ENCODE measurements at regions of chr9 and their contacts with region 1.

Region 1: DNA sequence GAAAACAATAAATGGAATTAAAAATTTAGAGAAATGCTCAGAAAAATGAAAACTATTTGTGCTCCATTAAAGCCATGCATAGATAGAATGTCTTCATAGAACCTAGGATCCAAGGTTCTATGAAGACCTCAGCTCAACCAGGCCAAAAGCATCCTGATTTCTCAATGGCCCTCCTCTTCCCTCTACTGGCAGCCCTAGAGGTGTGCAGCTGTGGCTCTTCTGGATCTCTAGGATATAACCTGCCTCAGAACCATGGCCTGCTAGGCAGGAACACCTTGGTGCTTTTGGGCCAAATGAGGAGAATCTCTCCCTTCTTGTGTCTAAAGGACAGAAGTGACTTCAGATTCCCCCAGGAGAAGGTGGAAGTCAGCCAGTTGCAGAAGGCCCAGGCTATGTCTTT is 15.1 kb downstream of the IFNA1 start:
- DNase-seq: peak; percentile 63
- ATAC-seq: peak; percentile 67
- H3K4me3 ChIP-seq: no peak overlapping the region
- H3K4me3 Mint-ChIP-seq: no peak overlapping the region
- H3K27ac ChIP-seq: no peak overlapping the region
- H3K27ac Mint-ChIP-seq: no peak overlapping the region
- H3K4me1 ChIP-seq: no peaks in the 10 kb centered on the region
- H3K4me1 Mint-ChIP-seq: no peaks in the 10 kb centered on the region
- H3K27me3 ChIP-seq: peaks cover 0 to 9% (median 8%) of the 10 kb centered on the region in 4 experiments
- H3K27me3 Mint-ChIP-seq: peaks cover 30% of the 10 kb centered on the region
- CTCF ChIP-seq: peak; percentile 79

Region 2: GRCh38 chr9:21317956-21318923 is 137.1 kb before region 1 on chr9:
- CTCF ChIA-PET with region 1: interaction called, 92 read pairs
- POLR2A ChIA-PET with region 1: no interaction called
- intact Hi-C with region 1: loop called (anchors 2 kb)
- DNase-seq: peak; percentile 48
- ATAC-seq: peak; percentile 64
- H3K4me3 ChIP-seq: no peak overlapping the region
- H3K4me3 Mint-ChIP-seq: no peak overlapping the region
- H3K27ac ChIP-seq: no peak overlapping the region
- H3K27ac Mint-ChIP-seq: no peak overlapping the region
- H3K4me1 ChIP-seq: no peaks in the 10 kb centered on the region
- H3K4me1 Mint-ChIP-seq: peaks cover 4% of the 10 kb centered on the region
- H3K27me3 ChIP-seq: no peaks in the 10 kb centered on the region
- H3K27me3 Mint-ChIP-seq: peaks cover 9% of the 10 kb centered on the region
- CTCF ChIP-seq: peak; percentile 83

Region 3: DNA sequence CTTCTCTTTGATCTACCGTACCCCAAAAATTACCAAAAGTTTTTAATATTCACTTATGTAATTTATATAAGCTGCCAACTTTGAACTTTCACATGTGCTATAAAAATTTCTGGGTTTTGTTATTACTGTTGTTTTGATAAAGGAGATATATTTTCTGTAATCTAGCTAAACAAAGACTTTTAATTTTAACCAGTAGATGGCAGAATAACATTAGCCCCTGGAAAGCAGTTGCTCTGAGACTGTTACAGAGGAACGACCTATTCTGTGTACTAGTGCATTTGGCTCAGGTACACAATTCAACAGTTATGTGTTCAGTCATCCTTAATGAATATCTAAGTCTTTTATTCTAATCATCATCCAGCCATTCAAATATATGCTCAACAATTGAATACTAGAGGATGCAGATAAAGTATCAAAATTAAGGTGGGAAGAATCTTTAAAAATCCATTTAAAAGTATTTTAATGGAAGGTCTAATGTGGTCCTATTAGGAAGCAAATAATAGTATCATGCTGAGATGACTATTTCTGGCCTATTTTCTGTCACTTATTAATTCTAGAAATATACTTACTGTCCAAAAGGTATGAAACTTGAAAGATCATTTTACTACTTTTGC is 128.7 kb before region 1 on chr9:
- CTCF ChIA-PET with region 1: interaction called, 92 read pairs
- POLR2A ChIA-PET with region 1: no interaction called
- intact Hi-C with region 1: loop called (anchors 1 kb)
- DNase-seq: peak; percentile 70
- ATAC-seq: peak; percentile 80
- H3K4me3 ChIP-seq: no peak overlapping the region
- H3K4me3 Mint-ChIP-seq: no peak overlapping the region
- H3K27ac ChIP-seq: no peak overlapping the region
- H3K27ac Mint-ChIP-seq: no peak overlapping the region
- H3K4me1 ChIP-seq: peaks cover 2 to 3% of the 10 kb centered on the region in 2 donors
- H3K4me1 Mint-ChIP-seq: peaks cover 26% of the 10 kb centered on the region
- H3K27me3 ChIP-seq: no peaks in the 10 kb centered on the region
- H3K27me3 Mint-ChIP-seq: no peaks in the 10 kb centered on the region
- CTCF ChIP-seq: peak; percentile 90

Region 4: DNA sequence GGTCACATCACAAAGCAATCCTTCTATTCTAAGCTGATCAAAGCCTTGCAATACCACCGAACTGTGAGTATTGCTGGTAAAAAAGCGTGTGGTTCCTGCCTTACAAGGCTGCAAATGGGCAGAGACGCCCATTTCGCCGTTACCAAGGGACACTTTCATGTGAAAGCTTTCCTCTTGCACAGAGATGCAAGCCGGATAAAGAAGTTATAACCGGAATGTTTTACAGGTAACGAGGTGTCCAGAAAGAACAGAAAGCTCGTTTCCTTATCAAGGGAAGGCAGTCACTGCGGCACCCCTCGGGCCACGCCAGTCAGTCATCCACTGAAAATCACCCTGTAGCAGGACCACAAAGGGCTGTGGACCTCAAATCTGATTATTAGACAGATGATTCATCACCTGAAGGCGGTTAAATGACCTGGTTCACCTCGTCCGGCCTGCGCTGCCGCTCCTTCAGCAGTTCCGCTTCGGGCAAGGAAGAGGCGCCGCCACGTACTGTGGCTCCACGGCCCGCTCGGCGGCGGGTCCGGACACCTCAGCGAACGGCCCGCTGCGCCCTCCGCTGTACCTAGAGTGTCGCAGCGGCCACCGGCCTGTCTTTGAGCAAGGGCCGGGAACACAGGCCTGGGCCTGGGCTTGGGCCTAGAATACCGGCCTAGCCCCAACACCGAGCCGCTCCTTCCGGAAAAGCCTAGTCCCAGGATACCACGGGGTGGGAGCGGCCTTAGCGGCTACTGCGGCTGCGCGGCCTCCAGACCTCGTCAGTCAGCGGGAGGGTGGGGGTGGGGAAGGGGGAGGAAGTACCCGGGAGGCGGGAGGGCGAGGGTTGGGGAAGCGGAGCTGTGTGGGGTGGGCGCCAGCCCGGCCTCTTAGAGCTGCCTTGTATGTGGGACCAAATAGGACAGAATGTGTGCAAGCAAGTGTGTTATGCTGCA is 120.4 kb before region 1 on chr9 and contains the start of gene KLHL9:
- CTCF ChIA-PET with region 1: interaction called, 39 read pairs
- POLR2A ChIA-PET with region 1: no interaction called
- intact Hi-C with region 1: no loop called
- DNase-seq: peak; percentile 93
- ATAC-seq: peak; percentile 89
- H3K4me3 ChIP-seq: peak within 1 kb of the TSS; percentile 83 to 97 (median 89)
- H3K4me3 Mint-ChIP-seq: peak within 1 kb of the TSS; percentile 95
- H3K27ac ChIP-seq: peak within 1 kb of the TSS; percentile 90
- H3K27ac Mint-ChIP-seq: peak within 1 kb of the TSS; percentile 92
- H3K4me1 ChIP-seq: peaks cover 18 to 27% of the 10 kb centered on the region in 2 donors
- H3K4me1 Mint-ChIP-seq: peaks cover 49% of the 10 kb centered on the region
- H3K27me3 ChIP-seq: peaks cover 0 to 6% (median under 1%) of the 10 kb centered on the region in 4 experiments
- H3K27me3 Mint-ChIP-seq: peaks cover 12% of the 10 kb centered on the region
- CTCF ChIP-seq: no peak
- total RNA-seq, gene KLHL9: 17.5 and 17.6 TPM in 2 replicates

Region 5: DNA sequence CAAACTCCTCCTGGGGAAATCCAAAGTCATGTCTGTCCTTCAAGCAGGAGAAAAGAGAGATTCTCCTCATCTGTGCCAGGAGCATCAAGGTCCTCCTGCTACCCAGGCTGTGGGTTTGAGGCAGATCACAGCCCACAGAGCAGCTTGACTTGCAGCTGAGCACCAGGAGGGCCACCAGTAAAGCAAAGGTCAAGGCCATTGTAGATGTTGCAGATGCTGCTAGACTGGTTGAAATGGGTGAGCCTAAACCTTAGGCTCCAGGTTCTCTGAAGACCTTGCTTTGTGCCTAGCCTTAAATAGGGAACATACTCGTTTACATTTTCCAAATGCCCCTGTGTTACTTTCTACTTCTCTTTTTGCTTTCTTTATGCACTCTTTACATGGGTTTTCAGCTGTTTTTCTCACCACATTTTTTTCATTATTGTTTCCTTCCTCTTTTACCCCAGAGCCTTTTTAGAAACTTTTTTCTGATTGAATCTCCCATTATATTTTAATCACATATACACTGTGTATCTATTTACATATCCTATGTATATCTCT is 70.1 kb before region 1 on chr9 and contains the start of gene IFNA2:
- CTCF ChIA-PET with region 1: no interaction called
- POLR2A ChIA-PET with region 1: no interaction called
- intact Hi-C with region 1: no loop called
- DNase-seq: peak; percentile 69
- ATAC-seq: no peak
- H3K4me3 ChIP-seq: no peak within 1 kb of the TSS
- H3K4me3 Mint-ChIP-seq: peak within 1 kb of the TSS; percentile 40
- H3K27ac ChIP-seq: no peak within 1 kb of the TSS
- H3K27ac Mint-ChIP-seq: peak within 1 kb of the TSS; percentile 70
- H3K4me1 ChIP-seq: peaks cover 20 to 25% of the 10 kb centered on the region in 2 donors
- H3K4me1 Mint-ChIP-seq: peaks cover 33% of the 10 kb centered on the region
- H3K27me3 ChIP-seq: peaks cover 0 to 35% (median 14%) of the 10 kb centered on the region in 4 experiments
- H3K27me3 Mint-ChIP-seq: peaks cover 30% of the 10 kb centered on the region
- CTCF ChIP-seq: no peak
- total RNA-seq, gene IFNA2: not detected in 2 replicates

Region 6: GRCh38 chr9:21395778-21396717 is 59.3 kb before region 1 on chr9:
- CTCF ChIA-PET with region 1: interaction called, 16 read pairs
- POLR2A ChIA-PET with region 1: no interaction called
- intact Hi-C with region 1: no loop called
- DNase-seq: peak; percentile 74
- ATAC-seq: peak; percentile 52
- H3K4me3 ChIP-seq: peak overlapping the region in 4 of 5 experiments; percentile 22 to 52 (median 32)
- H3K4me3 Mint-ChIP-seq: peak overlapping the region; percentile 68
- H3K27ac ChIP-seq: no peak overlapping the region
- H3K27ac Mint-ChIP-seq: no peak overlapping the region
- H3K4me1 ChIP-seq: peaks cover 8 to 11% of the 10 kb centered on the region in 2 donors
- H3K4me1 Mint-ChIP-seq: peaks cover 18% of the 10 kb centered on the region
- H3K27me3 ChIP-seq: peaks cover 3 to 57% (median 37%) of the 10 kb centered on the region in 4 experiments
- H3K27me3 Mint-ChIP-seq: peaks cover 69% of the 10 kb centered on the region
- CTCF ChIP-seq: peak; percentile 87

Region 7: DNA sequence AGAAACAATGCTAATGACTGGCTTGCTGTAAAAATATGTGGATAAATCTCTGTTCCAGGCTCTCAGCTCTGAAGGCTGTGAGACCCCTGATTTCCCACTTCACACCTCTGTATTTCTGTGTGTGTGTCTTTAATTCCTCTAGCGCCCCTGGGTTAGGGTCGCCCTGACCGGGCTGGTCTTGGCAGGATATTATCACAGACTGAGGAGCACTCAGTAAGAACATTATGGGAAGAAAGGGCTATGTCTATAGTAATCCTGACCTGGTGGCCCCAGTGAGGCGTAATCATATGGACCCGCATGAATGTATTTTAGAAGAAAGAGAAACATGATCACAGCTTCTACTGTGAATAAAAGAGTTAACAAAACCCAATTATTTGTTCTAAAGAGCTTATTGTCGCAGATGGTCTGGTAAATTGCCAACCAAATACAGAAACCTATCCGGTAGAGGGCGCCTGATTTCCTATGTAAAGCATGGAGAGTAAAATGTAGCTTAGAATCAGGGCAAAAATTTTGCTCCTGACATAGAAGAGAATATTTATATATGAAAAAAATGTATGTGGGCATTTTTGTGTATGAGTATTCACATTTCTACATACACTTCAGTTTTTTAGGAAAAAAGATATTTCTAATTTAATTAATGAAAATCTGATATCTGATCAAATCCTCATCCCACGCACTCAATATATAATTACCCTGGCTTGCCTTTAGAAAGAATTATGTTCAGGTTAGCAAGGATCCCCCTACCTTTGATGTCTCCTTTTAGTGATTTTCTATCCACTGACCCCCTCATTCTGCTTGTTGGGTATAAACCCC is 20.9 kb before region 1 on chr9:
- CTCF ChIA-PET with region 1: interaction called, 50 read pairs
- POLR2A ChIA-PET with region 1: no interaction called
- intact Hi-C with region 1: no loop called
- DNase-seq: peak; percentile 65
- ATAC-seq: no peak
- H3K4me3 ChIP-seq: no peak overlapping the region
- H3K4me3 Mint-ChIP-seq: no peak overlapping the region
- H3K27ac ChIP-seq: no peak overlapping the region
- H3K27ac Mint-ChIP-seq: peak overlapping the region; percentile 57
- H3K4me1 ChIP-seq: peaks cover 5 to 7% of the 10 kb centered on the region in 2 donors
- H3K4me1 Mint-ChIP-seq: peaks cover 14% of the 10 kb centered on the region
- H3K27me3 ChIP-seq: peaks cover 0 to 43% (median 28%) of the 10 kb centered on the region in 4 experiments
- H3K27me3 Mint-ChIP-seq: peaks cover 64% of the 10 kb centered on the region
- CTCF ChIP-seq: peak; percentile 66

Region 8: GRCh38 chr9:21481470-21482056 is 26.2 kb after region 1 on chr9:
- CTCF ChIA-PET with region 1: no interaction called
- POLR2A ChIA-PET with region 1: no interaction called
- intact Hi-C with region 1: no loop called
- DNase-seq: no peak
- ATAC-seq: no peak
- H3K4me3 ChIP-seq: no peak overlapping the region
- H3K4me3 Mint-ChIP-seq: no peak overlapping the region
- H3K27ac ChIP-seq: no peak overlapping the region
- H3K27ac Mint-ChIP-seq: no peak overlapping the region
- H3K4me1 ChIP-seq: peaks cover 5 to 8% of the 10 kb centered on the region in 2 donors
- H3K4me1 Mint-ChIP-seq: peaks cover 6% of the 10 kb centered on the region
- H3K27me3 ChIP-seq: no peaks in the 10 kb centered on the region
- H3K27me3 Mint-ChIP-seq: peaks cover 6% of the 10 kb centered on the region
- CTCF ChIP-seq: no peak

Region 9: DNA sequence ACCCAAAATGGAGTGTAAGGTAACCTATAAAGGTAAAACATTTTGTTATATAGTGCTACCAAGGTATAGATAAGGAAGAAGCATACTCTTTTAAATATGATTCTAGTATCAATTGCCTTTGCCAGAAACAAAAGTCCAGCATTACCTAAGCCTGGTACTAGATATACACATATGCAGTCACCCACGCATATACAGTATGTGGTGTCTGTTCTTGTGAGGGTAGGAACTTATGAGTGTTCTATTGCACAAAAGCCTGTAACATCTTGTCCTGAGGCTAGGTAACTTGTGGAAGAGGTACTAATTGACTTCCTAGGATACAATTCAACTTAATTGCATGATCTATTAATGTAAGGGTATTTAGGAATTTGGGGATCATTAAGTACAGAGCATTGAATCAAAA is 58.1 kb after region 1 on chr9:
- CTCF ChIA-PET with region 1: no interaction called
- POLR2A ChIA-PET with region 1: no interaction called
- intact Hi-C with region 1: no loop called
- DNase-seq: no peak
- ATAC-seq: no peak
- H3K4me3 ChIP-seq: no peak overlapping the region
- H3K4me3 Mint-ChIP-seq: no peak overlapping the region
- H3K27ac ChIP-seq: no peak overlapping the region
- H3K27ac Mint-ChIP-seq: no peak overlapping the region
- H3K4me1 ChIP-seq: no peaks in the 10 kb centered on the region
- H3K4me1 Mint-ChIP-seq: no peaks in the 10 kb centered on the region
- H3K27me3 ChIP-seq: no peaks in the 10 kb centered on the region
- H3K27me3 Mint-ChIP-seq: no peaks in the 10 kb centered on the region
- CTCF ChIP-seq: no peak

Region 10: GRCh38 chr9:21744841-21745240 is 289.5 kb after region 1 on chr9:
- CTCF ChIA-PET with region 1: no interaction called
- POLR2A ChIA-PET with region 1: no interaction called
- intact Hi-C with region 1: no loop called
- DNase-seq: no peak
- ATAC-seq: no peak
- H3K4me3 ChIP-seq: no peak overlapping the region
- H3K4me3 Mint-ChIP-seq: no peak overlapping the region
- H3K27ac ChIP-seq: no peak overlapping the region
- H3K27ac Mint-ChIP-seq: no peak overlapping the region
- H3K4me1 ChIP-seq: no peaks in the 10 kb centered on the region
- H3K4me1 Mint-ChIP-seq: no peaks in the 10 kb centered on the region
- H3K27me3 ChIP-seq: peaks cover 0 to 9% (median 6%) of the 10 kb centered on the region in 4 experiments
- H3K27me3 Mint-ChIP-seq: peaks cover 14% of the 10 kb centered on the region
- CTCF ChIP-seq: no peak